CD14-positive monocyte (primary cell): ENCODE measurements at regions of chr9 and their contacts with region 1.

Region 1: GRCh38 chr9:77935974-77936373 is 95.6 kb downstream of the GNAQ start:
- DNase-seq: peak; percentile 72 to 85 (median 83)
- H3K4me3 ChIP-seq: peak overlapping the region in 2 of 3 experiments; percentile 22 to 63
- H3K4me3 Mint-ChIP-seq: peak overlapping the region in 1 of 2 donors; percentile 71
- H3K27ac ChIP-seq: peak overlapping the region in 1 of 2 donors; percentile 80
- H3K27ac Mint-ChIP-seq: peak overlapping the region; percentile 89 to 95 (median 94)
- H3K4me1 ChIP-seq: peaks cover 41 to 43% of the 10 kb centered on the region in 2 donors
- H3K4me1 Mint-ChIP-seq: peaks cover 53% of the 10 kb centered on the region
- H3K27me3 ChIP-seq: no peaks in the 10 kb centered on the region
- H3K27me3 Mint-ChIP-seq: peaks cover 0 to 1% (median 0%) of the 10 kb centered on the region in 3 donors
- CTCF ChIP-seq: no peak

Region 2: DNA sequence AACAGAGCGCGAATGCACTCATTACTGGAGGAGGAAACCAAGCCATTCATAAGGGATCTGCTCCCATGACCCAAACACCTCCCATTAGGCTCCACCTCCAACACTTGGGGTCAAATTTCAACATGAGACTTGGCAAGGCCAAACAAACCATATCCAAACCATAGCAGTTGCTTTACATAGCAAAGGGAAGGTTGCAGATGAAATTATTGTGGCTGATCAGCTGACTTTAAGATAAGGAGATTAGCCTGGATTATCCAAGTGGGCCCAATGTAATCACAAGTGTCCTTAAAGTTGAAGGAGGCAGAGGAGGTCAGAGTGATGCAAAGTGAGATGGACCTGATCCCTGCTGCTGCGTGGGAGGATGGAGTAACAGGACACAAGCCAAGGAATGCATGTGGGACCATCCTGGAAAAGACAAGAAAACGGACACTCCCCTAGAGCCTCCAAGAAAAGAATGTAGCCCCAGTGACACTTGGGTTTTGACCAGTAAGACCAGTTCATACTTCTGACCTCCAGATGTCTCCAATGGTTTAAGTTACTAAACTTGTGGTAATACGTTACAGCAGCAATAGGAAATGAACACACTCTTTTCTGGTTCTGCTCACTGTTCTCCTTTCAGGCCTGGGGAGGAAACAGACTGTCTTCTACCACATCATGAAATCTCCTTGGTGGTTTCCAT is 71.6 kb before region 1 on chr9:
- intact Hi-C with region 1: loop called in 1 of 2 experiments (anchors 10 kb)
- DNase-seq: peak; percentile 69 to 77 (median 76)
- H3K4me3 ChIP-seq: peak overlapping the region in 1 of 3 experiments; percentile 1
- H3K4me3 Mint-ChIP-seq: peak overlapping the region in 1 of 2 donors; percentile 39
- H3K27ac ChIP-seq: peak overlapping the region in 1 of 2 donors; percentile 68
- H3K27ac Mint-ChIP-seq: peak overlapping the region; percentile 68 to 90 (median 83)
- H3K4me1 ChIP-seq: peaks cover 18 to 22% of the 10 kb centered on the region in 2 donors
- H3K4me1 Mint-ChIP-seq: peaks cover 36% of the 10 kb centered on the region
- H3K27me3 ChIP-seq: no peaks in the 10 kb centered on the region
- H3K27me3 Mint-ChIP-seq: no peaks in the 10 kb centered on the region
- CTCF ChIP-seq: peak; percentile 36